Left ventricle myocardium superior (tissue), 1 donor: ENCODE measurements at regions of chr1 and their contacts with region 1.

Region 1: GRCh38 chr1:95113684-95114083 is 3.5 kb upstream of the TLCD4 start:
- DNase-seq: no peak
- ATAC-seq: no peak

Region 2: DNA sequence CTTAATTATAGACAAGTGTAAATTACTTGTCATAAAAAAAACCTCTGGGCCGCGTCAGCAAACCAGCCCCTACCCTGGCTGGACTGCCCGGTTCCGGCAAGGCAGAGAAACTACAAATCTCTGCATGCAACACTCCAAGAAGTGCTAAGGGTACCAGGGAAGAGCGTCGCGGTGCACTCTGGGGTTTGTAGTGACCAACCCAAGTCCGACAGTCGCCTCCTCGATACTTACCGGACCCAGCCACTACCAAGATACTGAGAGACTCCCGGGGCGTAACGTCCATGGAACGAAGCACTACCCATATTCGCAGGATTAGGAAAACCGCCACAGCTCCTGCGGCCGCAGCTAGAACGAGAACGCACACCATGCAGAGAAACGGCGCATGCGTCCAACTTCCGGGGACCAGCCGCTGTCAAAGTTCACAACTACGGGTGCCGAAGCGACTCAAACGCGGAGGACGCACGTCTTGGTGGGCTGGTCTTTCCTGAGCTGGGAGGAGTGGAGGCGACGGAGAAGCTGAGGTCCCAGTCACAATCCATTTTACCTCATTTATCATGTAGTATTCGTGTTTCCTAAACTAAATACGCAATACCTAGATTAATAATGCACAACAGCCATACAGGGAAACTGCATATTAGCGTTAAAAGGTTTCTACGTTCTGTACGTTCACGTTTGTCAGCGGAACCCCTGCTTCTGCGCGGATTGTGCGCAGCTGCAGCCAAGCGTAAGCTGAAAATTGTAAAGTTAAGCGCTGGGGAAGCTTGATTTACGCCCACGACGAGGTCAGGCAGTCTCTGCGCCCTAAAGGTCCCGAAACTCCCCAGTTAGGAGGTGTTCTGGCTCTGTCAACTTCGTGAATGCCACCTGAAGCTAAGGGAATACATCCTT is 40.9 kb before region 1 on chr1 and contains the start of gene ALG14:
- intact Hi-C with region 1: loop called (anchors 2 kb)
- DNase-seq: peak; percentile 95
- ATAC-seq: peak; percentile 98
- total RNA-seq, gene ALG14: 1.3 TPM

Region 3: GRCh38 chr1:95247607-95248006 is 133.9 kb after region 1 on chr1:
- intact Hi-C with region 1: no loop called
- DNase-seq: no peak
- ATAC-seq: peak; percentile 81